ENCODE measurements at regions of chr3 and their contacts with region 1.

Region 1: GRCh38 chr3:52934630-52935530 is 37.5 kb upstream of the STIMATE start:
- DNase-seq: peak in 1 of 2 experiments; percentile 15
- H3K4me3 ChIP-seq: no peak overlapping the region
- H3K27ac ChIP-seq: no peak overlapping the region
- H3K4me1 ChIP-seq: no peaks in the 10 kb centered on the region
- H3K27me3 ChIP-seq: no peaks in the 10 kb centered on the region
- CTCF ChIP-seq: peak; percentile 67

Region 2: GRCh38 chr3:52742418-52743041 is 192.3 kb before region 1 on chr3:
- CTCF ChIA-PET with region 1: no interaction called
- POLR2A ChIA-PET with region 1: no interaction called
- intact Hi-C with region 1: loop called (anchors 5 kb)
- DNase-seq: peak in 1 of 2 experiments; percentile 0
- H3K4me3 ChIP-seq: no peak overlapping the region
- H3K27ac ChIP-seq: no peak overlapping the region
- H3K4me1 ChIP-seq: no peaks in the 10 kb centered on the region
- H3K27me3 ChIP-seq: no peaks in the 10 kb centered on the region
- CTCF ChIP-seq: peak; percentile 64

Region 3: GRCh38 chr3:52787672-52788625 is 146.9 kb before region 1 on chr3:
- CTCF ChIA-PET with region 1: no interaction called
- POLR2A ChIA-PET with region 1: interaction called, 26 read pairs
- intact Hi-C with region 1: no loop called
- DNase-seq: no peak
- H3K4me3 ChIP-seq: no peak overlapping the region
- H3K27ac ChIP-seq: no peak overlapping the region
- H3K4me1 ChIP-seq: no peaks in the 10 kb centered on the region
- H3K27me3 ChIP-seq: peaks cover 37% of the 10 kb centered on the region
- CTCF ChIP-seq: no peak

Region 4: GRCh38 chr3:53045518-53046170 is 110.8 kb after region 1 on chr3 and contains the start of gene SFMBT1:
- CTCF ChIA-PET with region 1: no interaction called
- POLR2A ChIA-PET with region 1: no interaction called
- intact Hi-C with region 1: loop called (anchors 10 kb)
- DNase-seq: peak in 1 of 2 experiments; percentile 54
- H3K4me3 ChIP-seq: peak within 1 kb of the TSS; percentile 84
- H3K27ac ChIP-seq: peak within 1 kb of the TSS; percentile 37; the same call in 1 of the 2 replicates
- H3K4me1 ChIP-seq: peaks cover 22% of the 10 kb centered on the region
- H3K27me3 ChIP-seq: no peaks in the 10 kb centered on the region
- CTCF ChIP-seq: no peak
- total RNA-seq, gene SFMBT1: 14.3 and 15.2 TPM in 2 replicates

Measured in PC-9 (cell line).